ENCODE measurements at regions of chr3 and their contacts with region 1.

Region 1: GRCh38 chr3:133661454-133662277 is at the start of gene TOPBP1:
- DNase-seq: peak; percentile 90
- H3K4me3 Mint-ChIP-seq: peak within 1 kb of the TSS; percentile 99
- H3K27ac Mint-ChIP-seq: peak within 1 kb of the TSS; percentile 99
- H3K4me1 Mint-ChIP-seq: peaks cover 47% of the 10 kb centered on the region
- H3K27me3 Mint-ChIP-seq: peaks cover 2% of the 10 kb centered on the region
- total RNA-seq, gene TOPBP1: 88.5 and 94.1 TPM in 2 replicates

Region 2: DNA sequence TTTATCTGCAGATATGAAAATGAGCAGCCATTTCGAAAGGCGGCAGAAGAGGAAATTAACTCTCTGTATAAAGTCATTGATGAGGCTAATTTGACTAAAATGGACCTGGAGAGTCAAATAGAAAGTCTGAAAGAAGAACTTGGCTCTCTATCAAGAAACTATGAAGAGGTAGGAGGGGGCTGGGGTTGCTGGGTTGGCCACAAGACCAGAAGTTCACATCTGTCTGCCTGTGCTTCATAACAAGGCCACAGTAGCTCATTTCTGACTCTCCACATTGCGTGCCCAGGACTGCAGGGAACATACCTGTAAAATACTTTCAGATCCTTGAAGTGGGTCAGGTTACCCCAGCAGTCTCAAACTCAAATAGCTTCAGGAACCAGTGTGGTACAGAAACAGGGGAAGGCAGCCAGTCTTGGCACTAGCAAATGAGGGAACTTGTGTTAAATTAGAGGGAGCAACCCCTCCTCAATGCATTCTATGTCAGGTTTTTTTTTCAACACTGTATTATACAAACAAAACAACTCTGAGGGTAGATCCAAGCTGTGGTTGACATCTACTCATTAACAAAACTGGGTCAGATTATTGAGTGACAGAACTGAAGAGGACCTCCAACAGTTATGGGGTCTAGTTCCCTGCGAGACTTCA is 213.1 kb before region 1 on chr3:
- intact Hi-C with region 1: loop called (anchors 2 kb)
- DNase-seq: peak; percentile 22
- H3K4me3 Mint-ChIP-seq: peak overlapping the region; percentile 34
- H3K27ac Mint-ChIP-seq: peak overlapping the region; percentile 80
- H3K4me1 Mint-ChIP-seq: peaks cover 34% of the 10 kb centered on the region
- H3K27me3 Mint-ChIP-seq: peaks cover 2% of the 10 kb centered on the region

Region 3: GRCh38 chr3:133494469-133494868 is 167.2 kb before region 1 on chr3:
- intact Hi-C with region 1: loop called (anchors 5 kb)
- DNase-seq: no peak
- H3K4me3 Mint-ChIP-seq: no peak overlapping the region
- H3K27ac Mint-ChIP-seq: no peak overlapping the region
- H3K4me1 Mint-ChIP-seq: peaks cover 41% of the 10 kb centered on the region
- H3K27me3 Mint-ChIP-seq: no peaks in the 10 kb centered on the region

Region 4: GRCh38 chr3:133644768-133645167 is 16.9 kb before region 1 on chr3:
- intact Hi-C with region 1: loop called (anchors 2 kb)
- DNase-seq: no peak
- H3K4me3 Mint-ChIP-seq: no peak overlapping the region
- H3K27ac Mint-ChIP-seq: no peak overlapping the region
- H3K4me1 Mint-ChIP-seq: peaks cover 24% of the 10 kb centered on the region
- H3K27me3 Mint-ChIP-seq: no peaks in the 10 kb centered on the region

Region 5: DNA sequence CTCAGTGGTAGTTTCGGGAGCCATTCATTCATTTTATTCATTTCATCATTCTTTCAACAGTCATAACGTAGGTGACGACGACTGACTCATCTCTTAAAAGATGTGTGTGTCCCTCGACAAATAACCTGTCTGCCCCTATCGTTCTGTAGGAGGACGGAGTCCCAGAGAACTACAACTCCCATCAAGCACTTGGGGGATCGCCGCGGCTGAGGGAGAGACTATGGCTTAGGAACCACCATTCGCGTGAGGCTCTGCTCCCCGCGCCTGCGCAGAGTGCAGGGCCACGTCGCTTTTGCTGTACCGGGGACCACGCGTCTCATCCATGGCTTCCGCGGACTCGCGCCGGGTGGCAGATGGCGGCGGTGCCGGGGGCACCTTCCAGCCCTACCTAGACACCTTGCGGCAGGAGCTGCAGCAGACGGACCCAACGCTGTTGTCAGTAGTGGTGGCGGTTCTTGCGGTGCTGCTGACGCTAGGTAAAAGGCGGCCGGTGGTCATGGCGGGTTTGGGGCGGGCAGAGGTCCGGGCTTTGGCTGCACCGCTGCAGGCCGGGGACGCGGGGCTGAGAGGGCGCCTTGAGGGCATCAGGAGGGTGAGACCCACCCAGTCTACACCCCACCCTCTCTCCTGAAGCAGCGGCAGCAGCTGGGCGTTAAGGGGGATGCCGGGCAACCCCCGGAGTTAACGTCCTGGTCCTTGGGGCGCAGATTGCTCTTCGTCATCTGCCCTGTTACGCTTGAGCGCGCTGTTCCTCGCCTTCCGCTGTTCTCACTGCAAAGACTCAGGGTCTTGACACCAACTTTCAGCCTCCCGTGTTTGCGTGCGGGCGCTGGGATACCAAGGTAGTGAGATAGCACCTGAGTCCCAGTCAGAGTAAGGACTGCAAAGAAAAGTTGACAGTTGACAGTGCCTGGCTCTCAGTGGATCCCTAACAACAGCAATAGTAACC is 144.1 kb after region 1 on chr3 and contains the start of gene SRPRB:
- intact Hi-C with region 1: loop called (anchors 1 kb)
- DNase-seq: peak; percentile 95
- H3K4me3 Mint-ChIP-seq: peak within 1 kb of the TSS; percentile 99
- H3K27ac Mint-ChIP-seq: peak within 1 kb of the TSS; percentile 95
- H3K4me1 Mint-ChIP-seq: peaks cover 28% of the 10 kb centered on the region
- H3K27me3 Mint-ChIP-seq: peaks cover 7% of the 10 kb centered on the region
- total RNA-seq, gene SRPRB: 108 and 115 TPM in 2 replicates

Region 6: GRCh38 chr3:133927540-133928066 is 265.9 kb after region 1 on chr3:
- intact Hi-C with region 1: loop called (anchors 1 kb)
- DNase-seq: peak; percentile 61
- H3K4me3 Mint-ChIP-seq: peak overlapping the region; percentile 46
- H3K27ac Mint-ChIP-seq: no peak overlapping the region
- H3K4me1 Mint-ChIP-seq: peaks cover 5% of the 10 kb centered on the region
- H3K27me3 Mint-ChIP-seq: peaks cover 30% of the 10 kb centered on the region

Region 7: DNA sequence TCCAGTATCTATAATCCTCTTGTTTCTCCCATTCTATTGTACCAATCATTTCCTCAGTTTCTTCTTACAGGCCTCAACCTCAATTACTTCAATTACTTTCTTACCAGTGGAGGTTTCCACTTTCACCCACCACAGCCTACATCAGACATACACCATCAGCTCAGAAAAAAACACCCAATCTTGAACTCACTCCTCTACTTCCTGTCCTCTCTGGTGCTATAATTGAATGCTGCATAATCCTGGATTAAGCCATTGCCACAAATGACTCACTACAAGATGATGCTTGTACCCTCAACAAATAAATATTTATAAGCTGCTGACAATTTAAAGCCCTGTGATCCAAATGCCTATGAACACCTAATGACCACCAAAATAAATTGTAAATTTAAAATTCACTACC is 570.5 kb after region 1 on chr3:
- intact Hi-C with region 1: no loop called
- DNase-seq: no peak
- H3K4me3 Mint-ChIP-seq: no peak overlapping the region
- H3K27ac Mint-ChIP-seq: no peak overlapping the region
- H3K4me1 Mint-ChIP-seq: peaks cover 14% of the 10 kb centered on the region
- H3K27me3 Mint-ChIP-seq: peaks cover 4% of the 10 kb centered on the region